ENCODE measurements at regions of chr4 and their contacts with region 1.

Region 1: GRCh38 chr4:147799986-147800555 is 68.2 kb downstream of the ARHGAP10 start:
- DNase-seq: peak; percentile 70
- H3K4me3 Mint-ChIP-seq: peak overlapping the region; percentile 65
- H3K27ac Mint-ChIP-seq: peak overlapping the region; percentile 66
- H3K4me1 Mint-ChIP-seq: peaks cover 58% of the 10 kb centered on the region
- H3K27me3 Mint-ChIP-seq: peaks cover 5% of the 10 kb centered on the region

Region 2: GRCh38 chr4:147683717-147684700 is 116.1 kb before region 1 on chr4 and contains the start of gene PRMT9:
- intact Hi-C with region 1: loop called (anchors 1 kb)
- DNase-seq: peak; percentile 85
- H3K4me3 Mint-ChIP-seq: peak within 1 kb of the TSS; percentile 92
- H3K27ac Mint-ChIP-seq: peak within 1 kb of the TSS; percentile 92
- H3K4me1 Mint-ChIP-seq: peaks cover 30% of the 10 kb centered on the region
- H3K27me3 Mint-ChIP-seq: peaks cover 9% of the 10 kb centered on the region
- total RNA-seq, gene PRMT9: 6.8 and 7.4 TPM in 2 replicates

Region 3: GRCh38 chr4:147843162-147843561 is 43.1 kb after region 1 on chr4:
- intact Hi-C with region 1: loop called (anchors 1 kb)
- DNase-seq: no peak
- H3K4me3 Mint-ChIP-seq: no peak overlapping the region
- H3K27ac Mint-ChIP-seq: no peak overlapping the region
- H3K4me1 Mint-ChIP-seq: no peaks in the 10 kb centered on the region
- H3K27me3 Mint-ChIP-seq: peaks cover 21% of the 10 kb centered on the region

Measured in activated T-helper 1 cell treated with anti-CD3 and anti-CD28 coated beads, Interleukin-12 subunit alpha, Interleukin-12 subunit beta, Interleukin-2, Interleukin-4 antibody, amounts not matched to agents 30 ng/mL and 10 ng/mL and 1 ng/mL, durations not matched to agents 14 hours and 24 hours and 36 hours (primary cell).